ENCODE measurements at regions of chr7 and their contacts with region 1.

Region 1: GRCh38 chr7:66493235-66494181 is 135.2 kb upstream of the KCTD7 start:
- DNase-seq: peak; percentile 94 to 98 (median 97)
- ATAC-seq: peak; percentile 97
- H3K4me3 ChIP-seq: peak overlapping the region; percentile 89
- H3K4me3 Mint-ChIP-seq: peak overlapping the region; percentile 84 to 96 (median 94)
- H3K27ac ChIP-seq: peak overlapping the region; percentile 92
- H3K27ac Mint-ChIP-seq: peak overlapping the region; percentile 95 to 100 (median 98)
- H3K4me1 ChIP-seq: peaks cover 4 to 8% of the 10 kb centered on the region in 2 donors
- H3K4me1 Mint-ChIP-seq: peaks cover 0 to 32% (median 17%) of the 10 kb centered on the region in 7 donors
- H3K27me3 ChIP-seq: no peaks in the 10 kb centered on the region
- H3K27me3 Mint-ChIP-seq: no peaks in the 10 kb centered on the region

Region 2: DNA sequence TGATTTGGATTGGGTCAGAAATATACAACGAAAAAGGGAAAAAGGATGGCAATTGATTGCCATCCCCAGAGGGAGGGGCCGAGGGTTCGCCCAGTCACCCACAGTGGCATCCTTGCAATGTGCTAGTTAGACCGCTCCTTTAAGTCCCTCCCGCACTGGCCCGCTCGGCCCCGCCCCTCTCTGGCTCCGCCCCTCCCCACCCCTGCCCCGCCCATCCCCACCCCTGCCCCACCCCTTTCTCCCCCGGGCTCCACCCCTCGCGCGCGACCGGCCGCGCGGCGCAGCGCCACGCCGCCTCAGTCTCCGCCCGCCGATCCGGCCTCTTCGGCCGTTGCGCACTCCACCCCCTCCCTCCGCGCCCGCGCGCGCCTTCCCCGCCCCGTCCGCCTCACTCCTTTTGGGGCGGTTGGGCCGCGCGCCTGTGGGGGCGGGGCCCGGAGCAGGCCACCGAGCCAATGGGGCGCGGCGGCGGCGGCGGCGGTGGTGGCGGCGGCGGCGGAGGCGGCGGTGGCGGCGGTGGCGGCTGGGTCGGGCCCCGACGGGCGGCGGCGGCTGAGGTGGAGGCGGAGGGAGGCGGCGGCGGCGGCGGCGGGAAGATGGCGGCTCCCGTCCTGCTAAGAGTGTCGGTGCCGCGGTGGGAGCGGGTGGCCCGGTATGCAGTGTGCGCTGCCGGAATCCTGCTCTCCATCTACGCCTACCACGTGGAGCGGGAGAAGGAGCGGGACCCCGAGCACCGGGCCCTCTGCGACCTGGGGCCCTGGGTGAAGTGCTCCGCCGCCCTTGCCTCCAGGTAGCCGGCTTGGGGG is 620.5 kb before region 1 on chr7 and contains the start of gene VKORC1L1:
- CTCF ChIA-PET with region 1: no interaction called
- POLR2A ChIA-PET with region 1: no interaction called
- intact Hi-C with region 1: loop called in 1 of 2 experiments (anchors 1 kb)
- DNase-seq: peak; percentile 87 to 97 (median 93)
- ATAC-seq: peak; percentile 94
- H3K4me3 ChIP-seq: peak within 1 kb of the TSS; percentile 47
- H3K4me3 Mint-ChIP-seq: peak within 1 kb of the TSS; percentile 81 to 92 (median 86)
- H3K27ac ChIP-seq: peak within 1 kb of the TSS; percentile 67
- H3K27ac Mint-ChIP-seq: peak within 1 kb of the TSS; percentile 43 to 90 (median 82)
- H3K4me1 ChIP-seq: no peaks in the 10 kb centered on the region
- H3K4me1 Mint-ChIP-seq: peaks cover 0 to 11% (median 6%) of the 10 kb centered on the region in 7 donors
- H3K27me3 ChIP-seq: no peaks in the 10 kb centered on the region
- H3K27me3 Mint-ChIP-seq: no peaks in the 10 kb centered on the region
- total RNA-seq, gene VKORC1L1: 3.4 to 15.8 (median 9.4) TPM

Region 3: GRCh38 chr7:66114793-66115649 is 378.5 kb before region 1 on chr7 and contains the start of gene CRCP:
- CTCF ChIA-PET with region 1: no interaction called
- POLR2A ChIA-PET with region 1: no interaction called
- intact Hi-C with region 1: loop called (anchors 2 kb)
- DNase-seq: peak; percentile 78 to 87 (median 83)
- ATAC-seq: peak; percentile 94
- H3K4me3 ChIP-seq: peak within 1 kb of the TSS; percentile 87
- H3K4me3 Mint-ChIP-seq: peak within 1 kb of the TSS; percentile 94 to 98 (median 96)
- H3K27ac ChIP-seq: peak within 1 kb of the TSS; percentile 95
- H3K27ac Mint-ChIP-seq: peak within 1 kb of the TSS; percentile 94 to 98 (median 96)
- H3K4me1 ChIP-seq: peaks cover 14 to 26% of the 10 kb centered on the region in 2 donors
- H3K4me1 Mint-ChIP-seq: peaks cover 28 to 56% (median 47%) of the 10 kb centered on the region in 7 donors
- H3K27me3 ChIP-seq: no peaks in the 10 kb centered on the region
- H3K27me3 Mint-ChIP-seq: no peaks in the 10 kb centered on the region
- total RNA-seq, gene CRCP: 29.8 to 37.9 (median 34.0) TPM

Region 4: GRCh38 chr7:66505531-66506451 is 12.3 kb after region 1 on chr7:
- CTCF ChIA-PET with region 1: interaction called, 3 read pairs
- POLR2A ChIA-PET with region 1: interaction called, 14 read pairs
- intact Hi-C with region 1: no loop called
- DNase-seq: peak in 7 of 9 donors; percentile 24 to 42 (median 32)
- ATAC-seq: peak; percentile 70
- H3K4me3 ChIP-seq: no peak overlapping the region
- H3K4me3 Mint-ChIP-seq: peak overlapping the region; percentile 34 to 81 (median 66)
- H3K27ac ChIP-seq: no peak overlapping the region
- H3K27ac Mint-ChIP-seq: peak overlapping the region in 1 of 9 donors; percentile 38
- H3K4me1 ChIP-seq: peaks cover 7 to 8% of the 10 kb centered on the region in 2 donors
- H3K4me1 Mint-ChIP-seq: peaks cover 0 to 10% (median 6%) of the 10 kb centered on the region in 7 donors
- H3K27me3 ChIP-seq: no peaks in the 10 kb centered on the region
- H3K27me3 Mint-ChIP-seq: peaks cover 0 to 31% (median 6%) of the 10 kb centered on the region in 5 donors

Region 5: DNA sequence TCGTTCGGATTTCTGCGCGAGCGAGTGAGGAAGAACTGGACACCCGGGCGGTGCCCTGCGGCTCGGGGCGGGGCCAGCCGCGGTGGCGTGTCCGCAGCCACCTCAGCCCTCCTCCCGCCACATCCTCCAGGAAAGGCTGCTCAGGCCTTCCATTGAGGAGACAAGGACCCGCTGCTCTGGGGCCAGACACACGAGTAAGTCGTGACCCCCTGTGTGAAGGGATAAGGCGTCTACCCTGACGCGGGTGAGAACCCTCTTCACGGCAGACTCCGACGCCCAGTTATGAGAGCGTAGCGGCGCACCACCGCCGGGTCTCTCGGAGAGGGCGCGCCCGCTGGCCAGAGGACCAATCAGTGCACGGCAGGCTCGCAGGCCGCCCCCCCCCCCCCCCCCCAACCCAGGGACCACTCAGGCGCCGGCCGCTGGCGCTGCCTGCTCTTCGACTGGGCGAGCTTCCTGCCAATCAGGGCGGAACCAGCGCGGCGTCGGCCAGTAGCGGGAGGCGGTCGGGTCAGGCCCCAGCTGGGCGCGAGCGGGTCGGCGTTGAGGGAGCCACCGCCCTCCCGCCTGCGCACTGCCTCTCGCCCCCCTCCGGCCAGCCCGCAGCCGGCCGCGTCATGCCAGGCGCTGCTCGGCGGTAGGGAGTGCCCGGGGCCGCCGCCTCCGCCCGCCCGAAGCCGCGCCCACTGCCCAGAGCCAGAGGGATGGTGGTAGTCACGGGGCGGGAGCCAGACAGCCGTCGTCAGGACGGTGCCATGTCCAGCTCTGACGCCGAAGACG is 135.0 kb after region 1 on chr7 and contains the start of gene KCTD7:
- CTCF ChIA-PET with region 1: no interaction called
- POLR2A ChIA-PET with region 1: interaction called, 6 read pairs
- intact Hi-C with region 1: loop called (anchors 1 kb)
- DNase-seq: peak; percentile 89 to 95 (median 92)
- ATAC-seq: peak; percentile 93
- H3K4me3 ChIP-seq: peak within 1 kb of the TSS; percentile 98
- H3K4me3 Mint-ChIP-seq: peak within 1 kb of the TSS; percentile 82 to 92 (median 89)
- H3K27ac ChIP-seq: peak within 1 kb of the TSS; percentile 91
- H3K27ac Mint-ChIP-seq: peak within 1 kb of the TSS; percentile 65 to 92 (median 89)
- H3K4me1 ChIP-seq: peaks cover 31 to 34% of the 10 kb centered on the region in 2 donors
- H3K4me1 Mint-ChIP-seq: peaks cover 37 to 51% (median 47%) of the 10 kb centered on the region in 7 donors
- H3K27me3 ChIP-seq: no peaks in the 10 kb centered on the region
- H3K27me3 Mint-ChIP-seq: peaks cover 0 to 4% (median 0%) of the 10 kb centered on the region in 5 donors
- total RNA-seq, gene KCTD7: 22.9 to 43.6 (median 33.8) TPM

Region 6: GRCh38 chr7:66740302-66740979 is 246.9 kb after region 1 on chr7 and contains the start of gene RABGEF1:
- CTCF ChIA-PET with region 1: no interaction called
- POLR2A ChIA-PET with region 1: interaction called, 5 read pairs
- intact Hi-C with region 1: loop called (anchors 1 to 2 kb)
- DNase-seq: peak; percentile 94 to 98 (median 95)
- ATAC-seq: peak; percentile 95
- H3K4me3 ChIP-seq: peak within 1 kb of the TSS; percentile 82
- H3K4me3 Mint-ChIP-seq: peak within 1 kb of the TSS; percentile 89 to 98 (median 94)
- H3K27ac ChIP-seq: peak within 1 kb of the TSS; percentile 84
- H3K27ac Mint-ChIP-seq: peak within 1 kb of the TSS; percentile 94 to 98 (median 96)
- H3K4me1 ChIP-seq: peaks cover 0 to 6% of the 10 kb centered on the region in 2 donors
- H3K4me1 Mint-ChIP-seq: peaks cover 30 to 74% (median 54%) of the 10 kb centered on the region in 7 donors
- H3K27me3 ChIP-seq: no peaks in the 10 kb centered on the region
- H3K27me3 Mint-ChIP-seq: no peaks in the 10 kb centered on the region
- total RNA-seq, gene RABGEF1: 20.7 to 35.7 (median 22.2) TPM

Region 7: DNA sequence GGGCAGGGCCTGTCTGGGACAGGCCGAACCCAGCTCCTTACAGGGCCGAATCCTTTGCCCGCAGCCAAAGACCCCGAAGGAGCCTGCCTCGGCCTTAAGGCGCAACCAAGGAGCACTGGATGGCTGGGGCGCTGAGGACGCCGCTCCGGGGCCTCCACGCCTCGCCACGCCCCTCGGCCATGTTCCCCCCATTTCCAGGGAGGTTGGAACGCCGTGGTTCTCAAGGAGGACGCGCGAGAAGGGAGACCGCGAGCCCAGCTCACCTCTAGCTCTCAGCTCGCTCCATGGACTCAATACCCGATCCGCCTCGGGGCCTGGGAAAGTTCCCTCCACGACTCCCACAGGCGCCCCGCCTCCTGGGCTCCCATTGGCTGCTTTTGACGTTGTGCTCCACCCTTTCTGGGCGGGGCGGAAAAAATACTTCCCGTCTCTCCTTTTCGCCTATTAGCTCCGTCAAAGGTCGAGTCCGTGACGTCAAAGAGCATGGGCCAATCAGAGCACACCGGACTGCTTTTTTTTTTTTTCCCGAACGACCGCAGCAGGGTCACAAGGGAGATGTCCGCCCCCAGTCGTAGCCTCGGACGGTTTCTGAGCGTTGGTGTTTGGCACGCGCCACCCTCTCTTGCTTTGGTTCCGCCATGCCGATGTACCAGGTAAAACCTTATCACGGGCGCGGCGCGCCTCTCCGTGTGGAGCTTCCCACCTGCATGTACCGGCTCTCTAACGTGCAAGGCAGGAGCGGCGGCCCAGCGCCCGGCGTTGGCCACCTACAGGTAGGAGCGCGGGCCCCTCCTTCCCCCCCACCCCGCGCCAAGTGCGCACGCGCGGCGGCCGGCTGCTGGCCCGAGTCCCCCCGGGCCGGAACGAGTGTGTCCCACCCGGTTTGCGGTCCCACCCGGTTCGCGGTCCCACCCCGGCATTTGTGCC is 808.9 kb after region 1 on chr7:
- CTCF ChIA-PET with region 1: no interaction called
- POLR2A ChIA-PET with region 1: interaction called, 3 read pairs
- intact Hi-C with region 1: loop called in 1 of 2 experiments (anchors 2 kb)
- DNase-seq: peak; percentile 90 to 97 (median 95)
- ATAC-seq: peak; percentile 89
- H3K4me3 ChIP-seq: peak overlapping the region; percentile 74
- H3K4me3 Mint-ChIP-seq: peak overlapping the region; percentile 89 to 99 (median 96)
- H3K27ac ChIP-seq: peak overlapping the region; percentile 88
- H3K27ac Mint-ChIP-seq: peak overlapping the region; percentile 87 to 99 (median 98)
- H3K4me1 ChIP-seq: peaks cover 3 to 7% of the 10 kb centered on the region in 2 donors
- H3K4me1 Mint-ChIP-seq: peaks cover 10 to 36% (median 25%) of the 10 kb centered on the region in 7 donors
- H3K27me3 ChIP-seq: no peaks in the 10 kb centered on the region
- H3K27me3 Mint-ChIP-seq: no peaks in the 10 kb centered on the region

Measured in naive thymus-derived CD4-positive, alpha-beta T cell (primary cell).